Aorta (tissue), 5 donors: ENCODE measurements at regions of chr11 and their contacts with region 1.

Region 1: DNA sequence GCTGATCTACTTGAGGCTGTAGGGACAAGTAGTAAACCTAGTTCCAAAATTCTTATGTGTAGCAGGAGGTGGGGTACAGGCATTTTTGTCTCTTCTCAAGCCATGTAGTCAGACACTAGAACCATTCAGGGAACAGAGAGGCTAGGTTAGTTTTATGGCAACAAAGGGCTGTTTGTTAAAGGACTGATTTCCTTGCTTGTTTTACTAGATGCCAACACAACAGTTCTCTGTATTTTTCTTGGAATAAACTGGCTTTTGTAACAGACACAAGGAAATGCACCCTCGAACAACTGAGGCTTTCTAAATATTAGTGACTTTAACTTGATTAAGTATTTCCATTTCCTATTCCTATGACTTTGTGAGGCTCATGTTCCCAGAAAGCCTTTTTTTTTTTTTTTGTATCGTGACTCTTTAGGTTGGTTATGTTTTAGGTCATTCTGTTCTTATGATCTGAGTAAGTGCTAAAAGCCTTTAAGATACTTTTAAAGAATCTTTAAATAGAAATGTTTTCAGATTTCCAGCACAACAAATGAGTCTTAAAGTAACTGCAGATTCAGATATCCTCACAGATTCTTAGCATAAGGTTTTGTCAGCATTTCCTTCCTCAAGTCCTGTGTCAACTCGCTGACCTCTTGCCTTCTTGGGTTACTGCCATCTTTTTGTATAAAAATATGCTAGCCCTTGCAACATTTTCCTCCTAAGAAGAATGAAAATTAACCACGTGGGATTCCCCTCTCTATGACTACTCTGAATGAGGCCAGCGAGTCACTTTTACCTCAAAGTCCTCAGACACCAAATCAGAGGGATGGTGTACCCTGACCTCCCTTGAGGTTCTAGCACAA is 92.5 kb downstream of the CCDC83 start:
- DNase-seq: no peak
- ATAC-seq: peak; percentile 83
- H3K4me3 ChIP-seq: no peak overlapping the region
- H3K27ac ChIP-seq: no peak overlapping the region
- H3K4me1 ChIP-seq: no peaks in the 10 kb centered on the region
- H3K27me3 ChIP-seq: no peaks in the 10 kb centered on the region

Region 2: GRCh38 chr11:86202013-86202336 is 254.3 kb after region 1 on chr11:
- intact Hi-C with region 1: loop called in 1 of 2 experiments (anchors 5 kb)
- DNase-seq: no peak
- ATAC-seq: peak; percentile 10
- H3K4me3 ChIP-seq: peak overlapping the region in 1 of 2 donors; percentile 54
- H3K27ac ChIP-seq: no peak overlapping the region
- H3K4me1 ChIP-seq: peaks cover 0 to 2% of the 10 kb centered on the region in 2 donors
- H3K27me3 ChIP-seq: no peaks in the 10 kb centered on the region